ENCODE measurements at regions of chr4 and their contacts with region 1.

Region 1: DNA sequence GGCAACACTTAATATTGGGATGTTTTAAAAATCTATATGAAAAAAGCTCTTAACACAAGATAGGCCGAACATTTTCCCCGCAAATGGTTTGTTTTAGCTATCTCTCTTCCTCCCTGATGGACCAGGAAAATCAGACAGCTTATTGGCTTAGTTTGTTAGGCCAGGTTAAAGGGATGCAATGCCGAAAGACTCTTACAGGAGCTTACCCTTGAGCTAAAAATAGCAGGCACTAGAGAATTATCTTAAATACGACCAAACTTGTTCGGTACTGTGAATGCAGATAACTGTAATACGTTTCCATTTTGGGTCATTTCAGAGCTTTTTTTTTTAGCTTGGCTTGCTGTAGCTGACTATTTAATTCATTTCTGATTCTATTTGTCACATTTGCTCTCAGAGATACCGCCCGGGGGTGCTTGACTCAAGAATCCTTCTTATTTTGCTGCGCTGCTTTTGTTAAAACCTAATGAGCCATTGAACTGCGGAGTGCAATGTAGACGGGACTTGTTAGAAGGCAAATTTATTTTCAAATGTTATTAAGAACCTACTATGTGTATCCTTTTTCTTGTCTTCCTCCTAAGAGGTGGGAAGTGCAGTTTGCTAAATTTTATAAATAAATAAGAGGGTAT is 23.3 kb downstream of the PPARGC1A start:
- DNase-seq: no peak
- ATAC-seq: no peak
- H3K4me3 ChIP-seq: no peak overlapping the region
- H3K27ac ChIP-seq: no peak overlapping the region
- H3K4me1 ChIP-seq: peaks cover 97% of the 10 kb centered on the region
- H3K27me3 ChIP-seq: no peaks in the 10 kb centered on the region
- CTCF ChIP-seq: no peak
- EP300 ChIP-seq: no peak
- POLR2A ChIP-seq: no peak
- RAD21 ChIP-seq: no peak

Region 2: GRCh38 chr4:23877758-23878229 is 11.2 kb after region 1 on chr4:
- CTCF ChIA-PET with region 1: no interaction called
- POLR2A ChIA-PET with region 1: interaction called, 11 read pairs
- in situ Hi-C with region 1: no loop called
- intact Hi-C with region 1: loop called (anchors 1 kb)
- DNase-seq: peak; percentile 97
- ATAC-seq: peak; percentile 96
- H3K4me3 ChIP-seq: peak overlapping the region; percentile 5 to 56 (median 27); a peak in 1 of 6 replicates
- H3K27ac ChIP-seq: peak overlapping the region; percentile 84
- H3K4me1 ChIP-seq: peaks cover 97% of the 10 kb centered on the region
- H3K27me3 ChIP-seq: no peaks in the 10 kb centered on the region
- CTCF ChIP-seq: no peak
- EP300 ChIP-seq: peak; percentile 71 to 96; a peak in 3 of 4 replicates
- POLR2A ChIP-seq: no peak
- RAD21 ChIP-seq: no peak

Measured in HepG2 (cell line).